ENCODE measurements at regions of chr16 and their contacts with region 1.

Region 1: DNA sequence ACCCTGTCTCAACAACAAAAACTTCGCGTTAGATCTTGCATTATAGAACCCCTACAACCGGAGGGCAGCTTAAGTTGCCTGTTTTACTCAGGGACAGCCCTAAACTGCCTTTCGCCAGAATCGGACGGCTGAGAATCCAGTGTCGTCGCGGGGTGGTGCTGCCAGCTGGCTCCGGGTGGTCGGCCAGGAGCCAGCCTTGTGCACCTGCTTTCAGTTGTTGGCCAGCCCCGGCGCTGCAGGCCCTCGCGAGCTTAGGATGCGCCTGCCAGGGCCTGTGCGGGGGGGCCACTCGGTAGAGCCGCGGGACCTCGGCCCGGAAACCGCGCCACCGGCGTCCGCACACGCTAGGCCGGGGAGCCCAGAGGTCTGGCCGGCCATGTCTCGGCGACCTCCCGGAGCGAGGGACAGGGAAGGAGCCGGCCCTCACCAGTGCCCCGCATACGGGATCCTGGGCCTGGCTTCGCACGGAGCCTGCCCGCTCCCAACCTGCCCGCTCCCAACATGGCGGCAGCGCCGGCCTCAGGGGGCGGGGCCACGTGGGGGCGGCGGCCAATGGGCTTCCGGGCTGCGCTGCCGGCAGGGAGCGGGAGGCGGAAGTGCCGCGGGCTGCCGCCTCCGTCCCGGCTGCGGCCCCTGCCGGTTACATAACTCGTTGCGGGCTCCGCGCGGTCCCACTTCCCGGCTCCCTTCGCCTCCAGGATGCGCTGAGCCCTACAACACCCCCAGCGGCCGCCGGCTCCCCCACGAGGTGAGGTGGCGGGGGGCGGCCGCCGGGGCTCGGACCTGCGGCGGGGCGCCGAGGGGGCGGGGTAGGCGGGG is 14.2 kb downstream of the NAA60 start:
- DNase-seq: peak; percentile 78
- ATAC-seq: peak; percentile 83
- H3K4me3 ChIP-seq: peak overlapping the region; percentile 74 to 93 (median 92)
- H3K27ac ChIP-seq: peak overlapping the region; percentile 91
- H3K4me1 ChIP-seq: peaks cover 70% of the 10 kb centered on the region
- H3K27me3 ChIP-seq: no peaks in the 10 kb centered on the region; a peak in 1 of 5 replicates
- CTCF ChIP-seq: peak; percentile 41; the same call in 1 of the 2 replicates
- EP300 ChIP-seq: 0 out of 4 replicates have a peak, but pooled peaks of 1 of the 2 experiments have one; percentile 9
- POLR2A ChIP-seq: peak; percentile 89 to 92
- RAD21 ChIP-seq: peak; percentile 66

Region 2: DNA sequence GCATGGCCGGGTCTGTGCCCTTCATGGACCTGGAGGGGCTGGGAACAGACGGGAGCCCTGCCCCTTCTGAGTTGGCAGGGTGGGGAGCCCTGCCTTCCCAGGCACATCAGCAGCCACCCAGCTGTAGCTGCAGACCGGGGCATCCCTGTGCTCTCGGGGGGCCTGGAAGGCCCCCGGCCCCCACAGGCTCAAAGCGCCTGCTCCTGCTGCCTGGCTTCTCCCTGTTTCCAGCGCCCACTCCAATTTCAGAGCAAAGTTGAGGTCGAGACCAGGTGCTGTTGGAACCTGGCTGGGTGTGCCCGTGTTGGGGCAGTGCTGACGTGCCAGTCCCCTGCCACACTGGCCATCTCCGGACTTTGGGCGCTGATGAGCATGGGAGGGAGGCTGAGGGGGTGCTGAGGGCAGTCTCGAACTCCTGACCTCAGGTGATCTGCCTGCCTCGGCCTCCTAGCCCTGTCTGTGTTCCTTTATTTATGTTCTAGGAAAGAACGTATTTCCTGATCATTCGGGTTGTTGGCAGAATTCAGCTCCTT is 732.8 kb before region 1 on chr16:
- CTCF ChIA-PET with region 1: no interaction called
- POLR2A ChIA-PET with region 1: no interaction called
- in situ Hi-C with region 1: no loop called
- intact Hi-C with region 1: no loop called
- DNase-seq: no peak
- ATAC-seq: no peak
- H3K4me3 ChIP-seq: no peak overlapping the region
- H3K27ac ChIP-seq: no peak overlapping the region
- H3K4me1 ChIP-seq: peaks cover 28% of the 10 kb centered on the region
- H3K27me3 ChIP-seq: no peaks in the 10 kb centered on the region; a peak in 2 of 5 replicates
- CTCF ChIP-seq: no peak
- EP300 ChIP-seq: no peak
- POLR2A ChIP-seq: no peak
- RAD21 ChIP-seq: no peak

Region 3: DNA sequence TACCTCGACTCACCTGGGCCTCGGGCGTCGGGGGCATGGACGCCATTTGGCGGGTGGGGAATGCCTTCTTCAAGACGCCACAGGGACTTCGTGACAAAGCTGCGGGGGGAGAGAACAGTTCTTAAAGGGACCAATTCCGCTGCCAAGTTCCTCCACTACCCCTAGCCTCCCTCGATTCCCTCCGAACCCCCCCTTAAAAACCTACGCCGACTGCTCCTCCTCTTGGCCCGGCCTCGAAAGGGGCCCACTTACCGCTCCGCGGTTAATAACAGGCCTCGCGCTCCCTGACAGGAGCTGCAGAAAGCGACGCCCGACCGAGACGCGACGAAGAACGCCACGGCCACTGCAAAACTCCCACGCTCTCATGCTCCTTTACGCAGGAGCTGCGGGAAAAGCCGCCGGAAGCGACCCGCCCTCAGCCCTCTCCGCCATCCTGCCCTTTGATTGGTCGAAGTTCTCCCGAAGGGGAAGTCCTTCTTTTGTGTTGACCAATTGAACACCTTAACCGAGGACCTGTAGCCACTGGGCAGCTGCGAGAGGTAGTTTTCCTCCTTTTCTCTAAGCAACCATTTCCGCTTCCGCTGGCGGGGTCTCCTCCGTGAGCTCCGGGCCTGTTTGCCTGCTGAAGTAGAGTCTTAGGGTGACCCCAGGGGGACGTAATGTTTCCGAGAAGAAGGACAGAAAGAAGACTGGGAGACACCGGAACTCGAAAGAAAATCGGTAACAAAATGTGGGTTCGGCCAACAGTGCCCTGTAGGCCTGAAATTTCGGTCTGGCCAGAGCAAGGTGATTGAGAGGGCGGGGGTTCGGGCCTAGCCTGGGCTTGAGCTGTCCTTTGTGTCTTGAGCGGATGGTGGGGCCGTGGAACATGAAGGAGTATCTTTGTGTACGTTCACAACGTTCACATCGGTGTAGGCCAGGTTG is 14.3 kb before region 1 on chr16 and contains the starts of genes NAA60 and ZNF597:
- CTCF ChIA-PET with region 1: no interaction called
- POLR2A ChIA-PET with region 1: interaction called, 46 read pairs
- in situ Hi-C with region 1: no loop called
- intact Hi-C with region 1: loop called (anchors 2 kb)
- DNase-seq: peak; percentile 93
- ATAC-seq: peak; percentile 94
- H3K4me3 ChIP-seq: peak within 1 kb of the TSS; percentile 66 to 76 (median 75)
- H3K27ac ChIP-seq: peak within 1 kb of the TSS; percentile 78
- H3K4me1 ChIP-seq: peaks cover 66% of the 10 kb centered on the region
- H3K27me3 ChIP-seq: no peaks in the 10 kb centered on the region; a peak in 1 of 5 replicates
- CTCF ChIP-seq: peak; percentile 2; the same call in 1 of the 2 replicates
- EP300 ChIP-seq: no peak
- POLR2A ChIP-seq: peak; percentile 42 to 69
- RAD21 ChIP-seq: no peak
- total RNA-seq, gene NAA60: 14.7 and 16.9 TPM in 2 replicates
- total RNA-seq, gene ZNF597: 2.4 and 3.8 TPM in 2 replicates

Region 4: DNA sequence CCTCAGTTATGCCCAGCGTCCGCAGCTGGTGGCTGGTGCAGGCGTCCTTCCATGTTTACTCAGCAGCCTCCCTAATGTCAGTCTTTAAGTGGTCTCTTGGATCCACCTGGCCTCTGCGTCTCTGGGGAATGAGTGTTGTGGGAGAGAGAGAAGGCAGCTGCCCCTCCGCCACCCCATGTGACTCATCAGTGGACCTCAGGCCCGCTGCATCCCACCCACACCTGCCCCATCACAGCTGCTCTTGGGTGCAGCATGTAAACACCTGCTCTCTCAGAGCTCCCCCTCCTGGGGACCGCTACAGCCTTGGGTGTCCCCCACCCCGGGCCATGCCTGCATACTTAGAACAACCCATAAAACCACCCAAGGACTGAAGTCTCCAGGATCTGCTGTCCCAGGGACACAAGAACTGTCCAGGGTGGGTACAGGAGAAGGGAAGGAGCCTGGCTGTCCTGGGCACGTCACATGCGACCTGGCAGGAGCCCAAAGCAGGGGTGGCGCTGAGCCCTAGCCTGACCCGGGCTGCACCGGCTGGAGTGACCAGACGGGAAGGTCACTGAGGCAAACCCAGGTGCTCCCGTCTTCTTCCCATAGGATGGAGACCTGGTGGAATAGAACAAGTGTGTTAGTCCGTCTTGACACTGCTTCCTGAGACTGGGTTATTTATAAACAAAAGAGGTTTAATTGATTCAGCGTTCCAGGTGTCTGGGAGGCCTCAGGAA is 33.4 kb after region 1 on chr16:
- CTCF ChIA-PET with region 1: no interaction called
- POLR2A ChIA-PET with region 1: no interaction called
- in situ Hi-C with region 1: no loop called
- intact Hi-C with region 1: loop called (anchors 5 kb)
- DNase-seq: peak; percentile 40
- ATAC-seq: peak; percentile 64
- H3K4me3 ChIP-seq: peak overlapping the region in 1 of 3 experiments; percentile 52; a peak in 2 of 6 replicates
- H3K27ac ChIP-seq: no peak overlapping the region
- H3K4me1 ChIP-seq: peaks cover 28% of the 10 kb centered on the region
- H3K27me3 ChIP-seq: peaks cover 3 to 4% of the 10 kb centered on the region in 2 experiments; a peak in 2 of 5 replicates
- CTCF ChIP-seq: peak; percentile 82
- EP300 ChIP-seq: no peak
- POLR2A ChIP-seq: no peak
- RAD21 ChIP-seq: 0 out of 2 replicates have a peak, but pooled peaks have one; percentile 25

Region 5: DNA sequence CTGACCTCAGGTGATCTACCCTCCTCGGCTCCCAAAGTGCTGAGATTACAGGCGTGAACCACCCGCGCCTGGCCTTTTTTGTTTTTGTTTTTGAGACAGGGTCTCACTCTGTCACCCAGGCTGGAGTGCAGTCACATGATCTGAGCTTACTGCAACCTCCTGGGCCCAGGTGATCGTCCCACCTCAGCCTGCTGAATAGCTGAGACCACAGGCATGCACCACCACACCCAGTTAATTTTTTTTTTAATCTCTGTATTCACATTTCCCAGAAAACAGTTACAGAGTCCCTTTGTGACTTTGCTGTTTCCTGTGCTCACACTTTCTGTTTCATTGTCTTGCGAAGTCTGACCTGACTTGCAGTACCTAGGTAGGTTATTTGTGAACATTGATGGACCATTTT is 45.9 kb after region 1 on chr16:
- CTCF ChIA-PET with region 1: interaction called, 3 read pairs
- POLR2A ChIA-PET with region 1: interaction called, 3 read pairs
- in situ Hi-C with region 1: no loop called
- intact Hi-C with region 1: loop called (anchors 1 kb)
- DNase-seq: no peak
- ATAC-seq: no peak
- H3K4me3 ChIP-seq: no peak overlapping the region
- H3K27ac ChIP-seq: no peak overlapping the region
- H3K4me1 ChIP-seq: peaks cover 15% of the 10 kb centered on the region
- H3K27me3 ChIP-seq: no peaks in the 10 kb centered on the region
- CTCF ChIP-seq: no peak
- EP300 ChIP-seq: no peak
- POLR2A ChIP-seq: no peak
- RAD21 ChIP-seq: no peak

Region 6: GRCh38 chr16:3578610-3579551 is 121.2 kb after region 1 on chr16:
- CTCF ChIA-PET with region 1: no interaction called
- POLR2A ChIA-PET with region 1: no interaction called
- in situ Hi-C with region 1: no loop called
- intact Hi-C with region 1: no loop called
- DNase-seq: no peak
- ATAC-seq: peak; percentile 17; the same call in 2 of the 3 replicates
- H3K4me3 ChIP-seq: no peak overlapping the region; a peak in 1 of 6 replicates
- H3K27ac ChIP-seq: no peak overlapping the region
- H3K4me1 ChIP-seq: 0 out of 2 replicates have a peak, but pooled peaks cover 15% of the 10 kb centered on the region
- H3K27me3 ChIP-seq: peaks cover 3 to 8% of the 10 kb centered on the region in 2 experiments; a peak in 4 of 5 replicates
- CTCF ChIP-seq: no peak
- EP300 ChIP-seq: no peak
- POLR2A ChIP-seq: no peak
- RAD21 ChIP-seq: no peak